CD8-positive, alpha-beta T cell (primary cell): ENCODE measurements at regions of chr2 and their contacts with region 1.

Region 1: DNA sequence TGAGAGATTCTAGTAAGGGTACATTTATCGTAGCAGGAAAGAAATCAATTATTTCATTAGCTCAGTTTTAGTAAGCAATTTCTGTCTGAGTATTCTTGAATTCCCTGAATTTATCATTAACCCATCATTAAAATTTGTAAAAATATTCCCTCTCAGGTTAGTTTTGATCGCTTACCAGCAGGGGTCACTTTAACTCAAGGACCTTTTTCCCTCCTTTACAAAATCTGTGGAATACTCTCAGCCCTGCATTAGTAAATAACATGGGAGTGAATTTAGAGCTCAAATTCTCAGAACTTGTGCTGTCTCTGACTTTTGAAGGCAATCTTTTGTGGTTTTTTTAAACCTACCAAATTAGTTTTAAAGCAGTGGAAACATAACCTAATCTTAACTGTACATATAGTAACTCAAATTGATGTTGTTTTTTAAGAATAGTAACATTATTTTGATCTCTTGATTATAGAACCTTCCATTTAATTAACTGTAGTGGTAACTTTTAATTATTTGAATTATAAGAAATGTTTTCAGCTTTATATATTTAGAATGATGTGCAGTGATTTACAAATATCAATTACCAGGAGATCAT is 97.2 kb downstream of the AGPS start:
- DNase-seq: peak in 2 of 9 experiments; percentile 2 to 8
- ATAC-seq: no peak
- H3K4me3 ChIP-seq: no peak overlapping the region
- H3K4me3 Mint-ChIP-seq: no peak overlapping the region
- H3K27ac ChIP-seq: no peak overlapping the region
- H3K27ac Mint-ChIP-seq: no peak overlapping the region
- H3K4me1 ChIP-seq: no peaks in the 10 kb centered on the region
- H3K4me1 Mint-ChIP-seq: no peaks in the 10 kb centered on the region
- H3K27me3 ChIP-seq: no peaks in the 10 kb centered on the region
- H3K27me3 Mint-ChIP-seq: no peaks in the 10 kb centered on the region
- CTCF ChIP-seq: no peak

Region 2: GRCh38 chr2:177604271-177605065 is 114.7 kb after region 1 on chr2:
- CTCF ChIA-PET with region 1: no interaction called
- POLR2A ChIA-PET with region 1: no interaction called
- intact Hi-C with region 1: loop called in 1 of 2 experiments (anchors 5 kb)
- DNase-seq: peak in 2 of 9 experiments; percentile 30 to 45
- ATAC-seq: no peak
- H3K4me3 ChIP-seq: no peak overlapping the region
- H3K4me3 Mint-ChIP-seq: no peak overlapping the region
- H3K27ac ChIP-seq: no peak overlapping the region
- H3K27ac Mint-ChIP-seq: no peak overlapping the region
- H3K4me1 ChIP-seq: no peaks in the 10 kb centered on the region
- H3K4me1 Mint-ChIP-seq: no peaks in the 10 kb centered on the region
- H3K27me3 ChIP-seq: no peaks in the 10 kb centered on the region
- H3K27me3 Mint-ChIP-seq: peaks cover 9% of the 10 kb centered on the region
- CTCF ChIP-seq: peak; percentile 38

Region 3: GRCh38 chr2:177724398-177725287 is 234.8 kb after region 1 on chr2:
- CTCF ChIA-PET with region 1: no interaction called
- POLR2A ChIA-PET with region 1: no interaction called
- intact Hi-C with region 1: loop called in 1 of 2 experiments (anchors 5 kb)
- DNase-seq: peak in 8 of 9 experiments; percentile 10 to 56 (median 35)
- ATAC-seq: no peak
- H3K4me3 ChIP-seq: no peak overlapping the region
- H3K4me3 Mint-ChIP-seq: no peak overlapping the region
- H3K27ac ChIP-seq: no peak overlapping the region
- H3K27ac Mint-ChIP-seq: no peak overlapping the region
- H3K4me1 ChIP-seq: no peaks in the 10 kb centered on the region
- H3K4me1 Mint-ChIP-seq: no peaks in the 10 kb centered on the region
- H3K27me3 ChIP-seq: no peaks in the 10 kb centered on the region
- H3K27me3 Mint-ChIP-seq: peaks cover 21% of the 10 kb centered on the region
- CTCF ChIP-seq: peak; percentile 54